ENCODE measurements at regions of chr2 and their contacts with region 1.

Region 1: GRCh38 chr2:97714950-97715652 is 1.7 kb downstream of the ZAP70 start:
- DNase-seq: peak; percentile 5
- H3K4me3 ChIP-seq: no peak overlapping the region
- H3K27ac ChIP-seq: no peak overlapping the region
- H3K4me1 ChIP-seq: peaks cover 10% of the 10 kb centered on the region
- H3K27me3 ChIP-seq: no peaks in the 10 kb centered on the region
- CTCF ChIP-seq: no peak

Region 2: GRCh38 chr2:97728091-97728731 is 13.1 kb after region 1 on chr2:
- intact Hi-C with region 1: loop called (anchors 1 kb)
- DNase-seq: peak; percentile 57
- H3K4me3 ChIP-seq: no peak overlapping the region
- H3K27ac ChIP-seq: peak overlapping the region; percentile 66
- H3K4me1 ChIP-seq: peaks cover 37% of the 10 kb centered on the region
- H3K27me3 ChIP-seq: peaks cover 6% of the 10 kb centered on the region
- CTCF ChIP-seq: no peak

Region 3: GRCh38 chr2:97798416-97798815 is 83.3 kb after region 1 on chr2:
- intact Hi-C with region 1: no loop called
- DNase-seq: no peak
- H3K4me3 ChIP-seq: no peak overlapping the region
- H3K27ac ChIP-seq: no peak overlapping the region
- H3K4me1 ChIP-seq: no peaks in the 10 kb centered on the region
- H3K27me3 ChIP-seq: no peaks in the 10 kb centered on the region
- CTCF ChIP-seq: no peak

Region 4: DNA sequence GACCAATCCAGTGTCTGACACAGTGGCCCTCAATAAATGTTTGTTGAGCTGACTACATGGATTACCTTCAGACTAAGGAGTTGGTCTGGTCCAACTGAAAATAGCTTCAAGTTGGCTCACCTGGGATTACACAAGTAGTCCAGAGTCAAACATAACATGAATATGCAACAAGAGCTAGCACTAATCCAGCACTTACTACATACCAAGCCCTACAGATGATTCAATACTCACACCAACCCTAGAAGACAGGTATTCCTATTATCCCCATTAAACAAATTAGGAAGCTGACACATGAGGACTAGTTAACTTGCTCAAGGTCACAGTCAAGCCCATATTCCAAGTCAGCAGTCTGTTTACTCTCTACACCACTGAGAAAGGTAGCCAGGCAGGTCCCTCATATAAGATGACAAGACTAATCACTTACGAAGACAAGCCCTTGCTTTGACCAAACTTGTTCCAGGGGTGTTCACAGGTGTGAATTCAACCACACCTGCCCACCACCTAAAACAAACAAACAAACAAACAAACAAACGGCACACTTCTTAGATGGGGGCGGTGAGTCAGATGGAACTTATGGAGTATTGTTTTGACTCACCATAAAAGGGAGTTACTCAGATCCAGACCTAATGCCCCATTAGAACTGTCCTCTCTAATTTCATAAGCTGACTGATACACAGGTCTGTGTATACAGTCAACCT is 251.6 kb after region 1 on chr2:
- intact Hi-C with region 1: no loop called
- DNase-seq: no peak
- H3K4me3 ChIP-seq: no peak overlapping the region
- H3K27ac ChIP-seq: no peak overlapping the region
- H3K4me1 ChIP-seq: peaks cover 88% of the 10 kb centered on the region
- H3K27me3 ChIP-seq: no peaks in the 10 kb centered on the region
- CTCF ChIP-seq: no peak

Region 5: GRCh38 chr2:98234776-98235175 is 519.7 kb after region 1 on chr2:
- intact Hi-C with region 1: no loop called
- DNase-seq: no peak
- H3K4me3 ChIP-seq: no peak overlapping the region
- H3K27ac ChIP-seq: no peak overlapping the region
- H3K4me1 ChIP-seq: peaks cover 10% of the 10 kb centered on the region
- H3K27me3 ChIP-seq: peaks cover 4% of the 10 kb centered on the region
- CTCF ChIP-seq: no peak